Activated B cell treated with CpG ODN at 0.5 μM for 24 hours (primary cell): ENCODE measurements at regions of chr2 and their contacts with region 1.

Region 1: DNA sequence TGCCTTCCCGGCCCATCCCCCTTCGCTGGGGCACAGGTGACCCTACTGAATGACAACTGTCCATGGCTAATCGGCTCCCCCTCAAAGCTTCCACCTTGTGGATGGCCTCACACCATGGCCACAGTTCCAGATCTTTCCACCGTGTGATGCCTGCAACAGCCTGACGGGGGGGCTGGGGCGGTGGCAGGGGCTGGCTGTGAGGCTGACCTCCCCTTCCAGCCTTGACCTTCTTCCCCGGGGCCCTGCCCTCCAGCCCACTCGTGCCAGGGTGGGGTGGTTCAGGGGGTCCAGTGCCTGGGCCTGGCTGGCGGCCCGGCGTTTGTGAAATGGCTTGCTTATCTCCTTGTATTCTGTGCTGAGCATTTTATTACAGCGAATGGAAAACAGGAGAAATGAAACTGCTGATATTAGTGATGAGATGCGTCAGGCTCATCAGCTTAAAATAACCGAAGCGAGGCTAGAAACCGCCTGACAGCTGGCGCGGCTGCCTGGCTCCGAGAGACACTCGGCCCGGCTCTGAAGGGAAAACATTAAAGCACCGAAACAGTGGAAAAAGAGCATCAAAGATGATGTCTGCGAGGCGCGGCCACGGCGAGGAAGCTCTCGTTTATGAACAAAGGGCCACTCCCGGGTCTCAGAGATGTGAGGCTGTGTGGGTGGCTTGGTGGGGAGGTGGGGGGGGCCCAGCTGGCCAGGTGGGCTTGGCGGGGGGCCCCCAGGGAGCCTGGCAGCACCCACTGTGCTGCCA is 916 bp upstream of the PDCD1 start:
- DNase-seq: peak; percentile 55
- ATAC-seq: peak; percentile 62
- H3K4me3 Mint-ChIP-seq: peak overlapping the region; percentile 79
- H3K27ac Mint-ChIP-seq: peak overlapping the region; percentile 91
- H3K4me1 Mint-ChIP-seq: peaks cover 41% of the 10 kb centered on the region
- H3K27me3 Mint-ChIP-seq: peaks cover 26% of the 10 kb centered on the region
- CTCF ChIP-seq: no peak

Region 2: DNA sequence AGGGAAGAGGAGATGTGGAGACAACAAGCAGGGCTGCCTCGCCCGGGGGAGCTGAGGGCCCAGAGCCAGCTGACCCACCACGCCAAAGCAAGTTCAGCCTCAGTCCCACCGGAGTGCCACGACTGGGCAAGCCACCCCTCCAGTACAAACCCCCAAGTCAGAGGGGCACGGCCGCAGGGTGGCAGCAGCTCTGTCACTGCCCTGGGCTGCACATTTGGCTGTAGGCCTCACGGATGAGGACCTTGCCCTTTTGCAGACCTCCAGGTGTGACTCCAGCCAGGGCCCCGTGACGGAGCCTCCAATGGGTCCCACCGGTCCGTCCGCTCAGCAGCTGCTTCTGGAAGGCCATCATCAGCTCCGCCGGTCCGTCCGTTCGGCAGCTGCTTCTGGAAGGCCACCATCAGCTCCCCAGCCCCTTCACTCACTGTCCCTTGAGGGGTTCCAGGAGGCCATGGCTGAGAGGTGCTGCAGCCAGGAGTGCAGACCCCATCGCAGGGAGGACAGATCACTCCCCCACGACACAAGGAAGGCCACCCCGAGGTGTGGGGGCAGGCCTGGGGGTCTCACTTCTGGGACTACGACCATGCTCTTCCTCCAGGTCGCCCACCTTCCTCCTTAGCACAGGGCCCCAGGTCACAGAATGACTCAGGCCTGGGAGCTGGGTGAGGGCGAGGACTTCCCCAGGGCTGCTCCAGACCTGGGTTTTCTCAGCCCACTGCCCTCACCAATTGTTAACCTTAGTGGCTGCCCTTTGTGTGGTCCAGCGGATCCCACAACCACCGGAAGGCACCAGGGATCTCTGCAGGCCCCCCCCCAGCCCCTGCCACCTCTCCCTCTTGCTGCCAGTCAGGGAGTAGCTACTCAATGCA is 326.6 kb before region 1 on chr2:
- CTCF ChIA-PET with region 1: no interaction called
- POLR2A ChIA-PET with region 1: no interaction called
- intact Hi-C with region 1: no loop called
- DNase-seq: no peak
- ATAC-seq: no peak
- H3K4me3 Mint-ChIP-seq: no peak overlapping the region
- H3K27ac Mint-ChIP-seq: no peak overlapping the region
- H3K4me1 Mint-ChIP-seq: no peaks in the 10 kb centered on the region
- H3K27me3 Mint-ChIP-seq: peaks cover 3% of the 10 kb centered on the region
- CTCF ChIP-seq: no peak

Region 3: DNA sequence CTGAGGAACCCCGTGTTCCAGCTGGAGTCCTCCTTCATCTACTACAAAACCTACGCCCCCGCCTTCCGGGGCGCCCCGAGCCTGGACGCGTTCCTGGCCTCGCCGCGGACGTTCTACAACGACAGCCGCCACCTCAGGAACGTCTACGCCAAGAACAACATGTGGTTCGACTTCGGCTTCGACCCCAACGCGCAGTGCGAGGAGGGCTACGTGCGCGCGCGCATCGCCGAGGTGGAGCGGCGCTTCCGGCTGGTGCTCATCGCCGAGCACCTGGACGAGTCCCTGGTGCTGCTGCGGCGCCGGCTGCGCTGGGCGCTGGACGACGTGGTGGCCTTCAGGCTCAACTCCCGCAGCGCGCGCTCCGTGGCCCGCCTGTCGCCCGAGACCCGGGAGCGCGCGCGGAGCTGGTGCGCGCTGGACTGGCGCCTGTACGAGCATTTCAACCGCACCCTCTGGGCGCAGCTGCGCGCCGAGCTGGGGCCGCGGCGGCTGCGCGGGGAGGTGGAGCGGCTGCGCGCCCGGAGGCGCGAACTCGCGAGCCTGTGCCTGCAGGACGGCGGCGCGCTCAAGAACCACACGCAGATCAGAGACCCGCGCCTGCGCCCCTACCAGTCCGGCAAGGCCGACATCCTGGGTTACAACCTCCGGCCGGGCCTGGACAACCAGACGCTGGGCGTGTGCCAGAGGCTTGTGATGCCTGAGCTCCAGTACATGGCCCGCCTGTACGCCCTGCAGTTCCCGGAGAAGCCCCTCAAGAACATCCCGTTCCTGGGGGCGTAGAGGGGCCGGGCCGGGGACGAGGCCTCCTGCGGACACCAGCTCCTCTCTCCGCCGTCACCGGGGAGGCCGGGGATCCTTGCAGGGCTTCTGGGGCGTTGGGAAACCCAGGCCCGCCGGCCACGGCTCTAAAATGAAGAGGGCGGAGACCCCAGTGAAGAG is 56.0 kb before region 1 on chr2:
- CTCF ChIA-PET with region 1: no interaction called
- POLR2A ChIA-PET with region 1: interaction called, 3 read pairs
- intact Hi-C with region 1: loop called (anchors 5 kb)
- DNase-seq: peak; percentile 45
- ATAC-seq: peak; percentile 62
- H3K4me3 Mint-ChIP-seq: peak overlapping the region; percentile 62
- H3K27ac Mint-ChIP-seq: no peak overlapping the region
- H3K4me1 Mint-ChIP-seq: peaks cover 17% of the 10 kb centered on the region
- H3K27me3 Mint-ChIP-seq: peaks cover 6% of the 10 kb centered on the region
- CTCF ChIP-seq: no peak

Region 4: DNA sequence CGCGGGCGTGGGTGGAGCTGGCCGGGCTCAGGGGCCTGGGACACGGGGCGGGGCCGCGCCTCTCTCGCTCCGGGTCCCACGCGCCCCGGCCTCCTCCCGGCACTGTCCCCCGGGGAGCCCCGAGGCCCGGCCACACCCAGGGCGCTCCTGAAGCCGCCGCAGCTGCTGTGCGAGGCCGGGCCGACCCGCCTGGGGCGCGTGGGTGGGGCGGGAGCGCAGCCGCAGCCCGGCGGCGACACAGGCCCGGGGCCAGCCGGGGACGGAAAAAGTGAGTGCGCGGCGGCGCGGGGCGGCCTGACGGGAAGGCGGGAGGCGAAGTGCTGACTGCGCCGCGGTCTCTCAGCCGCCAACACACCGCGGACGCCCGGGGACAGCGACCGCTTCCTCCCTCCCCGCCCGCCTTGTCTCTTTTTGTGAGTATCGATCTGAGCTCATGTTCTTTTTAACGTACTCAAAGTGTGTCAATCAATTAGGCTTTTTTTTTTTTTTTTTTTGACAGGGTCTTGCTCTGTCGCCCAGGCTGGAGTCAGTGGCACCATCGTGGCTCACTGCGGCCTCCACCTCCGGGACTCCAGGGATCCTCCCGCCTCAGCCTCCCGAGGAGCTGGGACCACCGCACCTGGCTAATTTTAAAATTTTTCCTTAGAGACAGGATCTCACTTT is 15.4 kb before region 1 on chr2:
- CTCF ChIA-PET with region 1: no interaction called
- POLR2A ChIA-PET with region 1: interaction called, 23 read pairs
- intact Hi-C with region 1: loop called (anchors 1 kb)
- DNase-seq: peak; percentile 79
- ATAC-seq: peak; percentile 91
- H3K4me3 Mint-ChIP-seq: peak overlapping the region; percentile 80
- H3K27ac Mint-ChIP-seq: peak overlapping the region; percentile 66
- H3K4me1 Mint-ChIP-seq: peaks cover 30% of the 10 kb centered on the region
- H3K27me3 Mint-ChIP-seq: no peaks in the 10 kb centered on the region
- CTCF ChIP-seq: no peak

Region 5: GRCh38 chr2:241914542-241914941 is 54.9 kb after region 1 on chr2:
- CTCF ChIA-PET with region 1: no interaction called
- POLR2A ChIA-PET with region 1: no interaction called
- intact Hi-C with region 1: no loop called
- DNase-seq: no peak
- ATAC-seq: no peak
- H3K4me3 Mint-ChIP-seq: no peak overlapping the region
- H3K27ac Mint-ChIP-seq: no peak overlapping the region
- H3K4me1 Mint-ChIP-seq: no peaks in the 10 kb centered on the region
- H3K27me3 Mint-ChIP-seq: no peaks in the 10 kb centered on the region
- CTCF ChIP-seq: no peak

Region 6: GRCh38 chr2:242046206-242046826 is 186.7 kb after region 1 on chr2:
- CTCF ChIA-PET with region 1: no interaction called
- POLR2A ChIA-PET with region 1: no interaction called
- intact Hi-C with region 1: no loop called
- DNase-seq: no peak
- ATAC-seq: no peak
- H3K4me3 Mint-ChIP-seq: no peak overlapping the region
- H3K27ac Mint-ChIP-seq: no peak overlapping the region
- H3K4me1 Mint-ChIP-seq: no peaks in the 10 kb centered on the region
- H3K27me3 Mint-ChIP-seq: peaks cover 29% of the 10 kb centered on the region
- CTCF ChIP-seq: no peak